ENCODE measurements at regions of chr5 and their contacts with region 1.

Region 1: GRCh38 chr5:108919591-108920326 is 172.1 kb downstream of the FER start:
- DNase-seq: no peak
- H3K4me3 Mint-ChIP-seq: no peak overlapping the region
- H3K27ac Mint-ChIP-seq: no peak overlapping the region
- H3K4me1 Mint-ChIP-seq: peaks cover 18% of the 10 kb centered on the region
- H3K27me3 Mint-ChIP-seq: no peaks in the 10 kb centered on the region
- CTCF ChIP-seq: no peak

Region 2: DNA sequence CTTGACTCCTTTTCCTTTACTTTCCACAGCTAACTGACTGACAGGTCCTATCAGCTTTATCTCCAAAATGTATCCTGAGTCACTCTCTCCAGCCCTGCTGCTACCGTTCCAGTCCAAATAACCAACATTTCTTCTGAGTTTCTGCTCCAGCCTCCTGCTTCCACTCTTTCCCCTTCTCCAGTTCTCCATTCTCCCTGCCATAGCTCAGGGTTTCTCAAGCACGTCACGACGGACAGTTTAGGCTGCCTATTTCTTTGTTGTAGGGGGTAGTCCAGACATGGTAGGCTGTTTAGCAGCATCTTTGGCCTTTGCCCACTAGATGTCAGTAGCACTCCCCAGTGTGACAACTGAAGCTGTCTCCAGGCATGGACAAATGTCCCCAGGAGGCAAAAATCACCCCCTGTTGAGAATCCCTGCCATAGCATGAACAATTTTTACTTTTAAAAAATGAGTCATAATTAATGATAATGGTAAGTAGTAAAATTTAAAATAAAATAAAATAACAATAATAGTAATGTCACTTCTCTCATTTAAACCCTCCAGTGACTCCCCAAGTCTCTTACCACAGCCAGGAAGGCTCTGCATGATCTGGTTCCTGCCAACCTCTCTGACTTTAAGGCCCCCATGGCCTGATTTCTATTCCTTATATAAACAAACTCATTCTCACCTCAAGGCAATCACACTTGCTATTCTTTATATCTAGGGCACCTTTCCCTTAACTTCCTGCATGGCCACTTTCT is 277.4 kb before region 1 on chr5:
- CTCF ChIA-PET with region 1: interaction called, 11 read pairs
- intact Hi-C with region 1: loop called (anchors 5 kb)
- DNase-seq: peak; percentile 82
- H3K4me3 Mint-ChIP-seq: peak overlapping the region; percentile 31
- H3K27ac Mint-ChIP-seq: peak overlapping the region; percentile 30
- H3K4me1 Mint-ChIP-seq: peaks cover 17% of the 10 kb centered on the region
- H3K27me3 Mint-ChIP-seq: no peaks in the 10 kb centered on the region
- CTCF ChIP-seq: peak; percentile 93

Region 3: DNA sequence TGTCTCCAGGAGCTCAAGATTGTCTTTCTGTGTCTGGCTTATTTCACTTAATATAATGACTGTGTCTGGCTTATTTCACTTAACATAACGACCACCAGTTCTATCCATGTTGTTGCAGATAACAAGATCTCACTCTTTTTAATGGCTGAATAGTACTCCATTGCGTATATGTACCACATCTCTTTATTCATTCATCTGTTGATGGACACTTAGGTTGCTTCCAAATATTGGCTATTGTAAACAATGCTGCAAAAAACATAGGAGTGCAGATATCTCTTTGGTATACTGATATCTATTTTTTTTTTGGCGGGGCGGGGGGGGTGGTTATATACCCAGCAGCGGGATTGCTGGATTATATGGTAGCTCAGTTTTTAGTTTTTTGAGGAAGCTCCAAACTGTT is 126.6 kb before region 1 on chr5:
- CTCF ChIA-PET with region 1: no interaction called
- intact Hi-C with region 1: loop called (anchors 5 kb)
- DNase-seq: no peak
- H3K4me3 Mint-ChIP-seq: no peak overlapping the region
- H3K27ac Mint-ChIP-seq: peak overlapping the region; percentile 68
- H3K4me1 Mint-ChIP-seq: peaks cover 11% of the 10 kb centered on the region
- H3K27me3 Mint-ChIP-seq: no peaks in the 10 kb centered on the region
- CTCF ChIP-seq: no peak

Region 4: GRCh38 chr5:108858959-108859358 is 60.8 kb before region 1 on chr5:
- CTCF ChIA-PET with region 1: no interaction called
- intact Hi-C with region 1: no loop called
- DNase-seq: no peak
- H3K4me3 Mint-ChIP-seq: no peak overlapping the region
- H3K27ac Mint-ChIP-seq: no peak overlapping the region
- H3K4me1 Mint-ChIP-seq: no peaks in the 10 kb centered on the region
- H3K27me3 Mint-ChIP-seq: no peaks in the 10 kb centered on the region
- CTCF ChIP-seq: no peak

Region 5: DNA sequence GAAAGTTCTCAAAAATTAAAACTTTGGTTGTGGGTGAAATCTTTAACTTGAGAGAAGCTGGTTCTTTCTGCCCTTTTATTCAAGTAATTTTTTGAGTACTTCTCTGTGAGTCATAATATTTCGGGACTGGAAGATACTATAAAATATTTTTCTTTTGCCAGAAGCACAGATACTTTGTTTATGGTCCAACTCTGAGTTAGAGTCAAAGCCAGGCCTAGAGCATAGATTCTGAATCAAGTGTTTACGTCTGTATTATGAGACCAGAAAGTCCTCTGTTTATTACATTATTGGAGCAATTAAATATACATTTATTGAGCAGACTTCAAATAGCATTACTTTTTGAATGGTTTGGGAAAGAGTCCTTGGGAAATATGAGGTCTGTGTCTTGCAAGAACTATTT is 15.9 kb after region 1 on chr5:
- CTCF ChIA-PET with region 1: no interaction called
- intact Hi-C with region 1: no loop called
- DNase-seq: no peak
- H3K4me3 Mint-ChIP-seq: no peak overlapping the region
- H3K27ac Mint-ChIP-seq: no peak overlapping the region
- H3K4me1 Mint-ChIP-seq: no peaks in the 10 kb centered on the region
- H3K27me3 Mint-ChIP-seq: no peaks in the 10 kb centered on the region
- CTCF ChIP-seq: no peak

Region 6: GRCh38 chr5:108953940-108954339 is 34.2 kb after region 1 on chr5:
- CTCF ChIA-PET with region 1: no interaction called
- intact Hi-C with region 1: no loop called
- DNase-seq: no peak
- H3K4me3 Mint-ChIP-seq: no peak overlapping the region
- H3K27ac Mint-ChIP-seq: no peak overlapping the region
- H3K4me1 Mint-ChIP-seq: no peaks in the 10 kb centered on the region
- H3K27me3 Mint-ChIP-seq: no peaks in the 10 kb centered on the region
- CTCF ChIP-seq: no peak

Region 7: DNA sequence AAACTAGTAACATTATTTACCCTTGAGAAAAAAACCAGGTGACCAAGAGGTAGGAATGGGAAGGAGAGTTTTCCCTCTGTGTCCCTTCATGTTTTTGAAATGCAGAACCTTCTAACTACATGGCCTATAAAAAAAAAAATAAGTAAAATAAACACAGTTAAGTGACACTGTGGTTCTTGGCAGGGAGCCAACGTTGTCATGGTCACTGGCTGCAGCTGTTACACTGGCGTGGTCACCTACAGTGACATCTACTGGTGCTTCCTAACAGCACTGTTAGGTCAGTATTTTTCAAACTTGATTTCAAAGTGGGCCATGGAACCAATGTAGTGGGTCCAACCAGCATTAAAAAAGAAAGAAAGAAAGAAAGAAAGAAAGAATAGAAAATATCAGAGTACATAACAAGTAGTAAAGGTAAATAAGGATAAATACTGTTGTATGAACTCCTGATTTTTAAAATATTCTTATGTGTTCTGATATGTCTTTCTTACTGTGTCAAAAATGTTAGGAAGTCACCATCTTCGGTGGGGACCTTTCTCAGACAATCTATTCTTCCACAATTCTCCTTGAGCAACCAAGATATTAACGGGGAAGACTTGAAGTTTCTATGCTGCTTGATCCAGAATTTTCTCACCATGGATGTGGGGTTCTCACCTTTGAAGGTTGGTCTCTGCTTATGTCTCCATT is 549.1 kb after region 1 on chr5:
- CTCF ChIA-PET with region 1: interaction called, 6 read pairs
- intact Hi-C with region 1: loop called (anchors 2 kb)
- DNase-seq: peak; percentile 95
- H3K4me3 Mint-ChIP-seq: no peak overlapping the region
- H3K27ac Mint-ChIP-seq: peak overlapping the region; percentile 2
- H3K4me1 Mint-ChIP-seq: peaks cover 39% of the 10 kb centered on the region
- H3K27me3 Mint-ChIP-seq: no peaks in the 10 kb centered on the region
- CTCF ChIP-seq: peak; percentile 66

Region 8: GRCh38 chr5:109688971-109689739 is 769.4 kb after region 1 on chr5:
- CTCF ChIA-PET with region 1: no interaction called
- intact Hi-C with region 1: loop called (anchors 5 kb)
- DNase-seq: peak; percentile 92
- H3K4me3 Mint-ChIP-seq: peak overlapping the region; percentile 96
- H3K27ac Mint-ChIP-seq: peak overlapping the region; percentile 97
- H3K4me1 Mint-ChIP-seq: peaks cover 35% of the 10 kb centered on the region
- H3K27me3 Mint-ChIP-seq: no peaks in the 10 kb centered on the region
- CTCF ChIP-seq: peak; percentile 12

Measured in Calu3 (cell line).